GM10248 (cell line): ENCODE measurements at regions of chr16 and their contacts with region 1.

Region 1: DNA sequence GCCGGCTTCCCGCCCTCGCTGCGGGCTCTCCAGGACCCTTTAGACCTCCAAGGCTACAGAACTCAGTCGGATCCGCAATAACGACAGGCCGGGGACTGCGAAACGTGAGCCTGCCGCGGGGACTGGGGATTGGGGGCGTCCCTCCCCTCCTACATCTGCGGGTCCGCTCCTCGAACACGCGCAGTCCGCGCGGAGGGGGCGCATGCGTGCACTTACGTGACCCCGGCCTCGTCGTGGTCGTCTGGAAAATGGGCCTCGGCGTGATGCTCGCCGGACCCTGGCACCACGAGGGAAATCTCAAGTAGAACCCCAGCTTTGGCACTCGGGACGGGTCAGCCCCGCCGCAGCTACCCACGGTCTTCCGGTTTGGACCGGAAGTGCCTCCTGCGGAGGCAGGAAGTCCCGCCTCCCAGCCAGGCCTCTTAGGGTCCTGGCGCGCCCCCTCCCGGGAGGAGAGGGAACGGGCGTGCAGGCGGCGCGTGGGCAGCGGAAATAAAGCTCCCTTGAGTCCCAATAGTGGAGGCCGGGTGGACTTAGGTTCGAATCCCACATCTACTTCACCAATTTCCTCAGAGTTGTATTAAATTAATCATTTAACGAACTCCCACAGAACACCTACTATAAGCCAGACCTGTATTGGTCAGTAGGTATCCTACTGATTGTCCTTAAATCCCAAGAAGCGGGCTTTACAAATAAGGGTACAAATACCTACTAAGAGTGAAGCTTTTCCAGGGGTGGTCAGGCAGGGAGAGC is at the start of gene TAF1C:
- DNase-seq: peak; percentile 99
- CTCF ChIP-seq: peak; percentile 99

Region 2: DNA sequence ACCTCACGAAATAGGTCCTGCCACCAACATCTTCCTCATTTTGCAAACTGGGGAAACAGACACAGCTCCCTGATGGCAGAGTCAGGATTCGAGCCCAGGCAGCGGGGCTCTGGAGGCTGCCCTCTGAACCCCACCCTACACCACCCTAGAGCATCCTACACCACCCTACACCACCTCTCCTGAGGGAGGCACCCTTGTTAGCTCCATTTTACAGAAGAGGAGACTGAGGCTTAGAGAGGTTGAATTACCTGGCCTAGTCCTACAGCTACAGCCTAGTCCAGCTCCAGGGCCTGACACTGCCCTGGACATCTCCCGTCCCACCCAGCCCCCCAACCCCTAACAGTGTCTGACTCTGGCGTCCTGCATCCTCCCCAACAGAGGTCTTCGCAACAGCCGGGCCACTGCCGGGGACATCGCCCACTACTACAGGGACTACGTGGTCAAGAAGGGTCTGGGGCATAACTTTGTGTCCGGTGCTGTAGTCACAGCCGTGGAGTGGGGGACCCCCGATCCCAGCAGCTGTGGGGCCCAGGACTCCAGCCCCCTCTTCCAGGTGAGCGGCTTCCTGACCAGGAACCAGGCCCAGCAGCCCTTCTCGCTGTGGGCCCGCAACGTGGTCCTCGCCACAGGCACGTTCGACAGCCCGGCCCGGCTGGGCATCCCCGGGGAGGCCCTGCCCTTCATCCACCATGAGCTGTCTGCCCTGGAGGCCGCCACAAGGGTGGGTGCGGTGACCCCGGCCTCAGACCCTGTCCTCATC is 222.0 kb before region 1 on chr16:
- CTCF ChIA-PET with region 1: interaction called, 11 read pairs
- POLR2A ChIA-PET with region 1: no interaction called
- DNase-seq: no peak
- CTCF ChIP-seq: no peak

Region 3: DNA sequence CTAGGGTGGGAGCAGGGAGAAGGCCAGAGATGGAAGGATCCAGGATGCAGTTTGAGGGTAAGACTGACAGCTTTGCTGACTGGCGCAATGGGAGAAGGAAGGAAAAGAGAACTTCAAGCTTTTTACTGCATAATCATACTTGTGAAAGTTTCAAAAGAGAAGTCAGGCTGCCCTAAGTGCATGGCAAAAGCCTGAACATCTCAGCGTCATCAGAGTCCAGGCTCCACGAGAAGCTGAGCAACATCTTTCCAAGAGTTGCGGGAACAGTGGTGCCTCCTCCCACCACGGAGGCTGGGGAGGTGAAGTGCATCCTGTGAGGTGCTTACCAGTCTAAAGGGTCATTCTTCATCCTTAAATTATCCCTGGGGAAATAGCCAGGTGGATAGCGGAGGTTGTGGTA is 117.3 kb before region 1 on chr16:
- CTCF ChIA-PET with region 1: interaction called, 11 read pairs
- POLR2A ChIA-PET with region 1: no interaction called
- DNase-seq: no peak
- CTCF ChIP-seq: no peak

Region 4: GRCh38 chr16:84096115-84097012 is 90.5 kb before region 1 on chr16:
- CTCF ChIA-PET with region 1: interaction called, 155 read pairs
- POLR2A ChIA-PET with region 1: no interaction called
- DNase-seq: no peak
- CTCF ChIP-seq: no peak

Region 5: GRCh38 chr16:84116720-84117493 is 70.0 kb before region 1 on chr16 and contains the start of gene MBTPS1:
- CTCF ChIA-PET with region 1: interaction called, 24 read pairs
- POLR2A ChIA-PET with region 1: interaction called, 4 read pairs
- DNase-seq: peak; percentile 97
- CTCF ChIP-seq: no peak

Region 6: DNA sequence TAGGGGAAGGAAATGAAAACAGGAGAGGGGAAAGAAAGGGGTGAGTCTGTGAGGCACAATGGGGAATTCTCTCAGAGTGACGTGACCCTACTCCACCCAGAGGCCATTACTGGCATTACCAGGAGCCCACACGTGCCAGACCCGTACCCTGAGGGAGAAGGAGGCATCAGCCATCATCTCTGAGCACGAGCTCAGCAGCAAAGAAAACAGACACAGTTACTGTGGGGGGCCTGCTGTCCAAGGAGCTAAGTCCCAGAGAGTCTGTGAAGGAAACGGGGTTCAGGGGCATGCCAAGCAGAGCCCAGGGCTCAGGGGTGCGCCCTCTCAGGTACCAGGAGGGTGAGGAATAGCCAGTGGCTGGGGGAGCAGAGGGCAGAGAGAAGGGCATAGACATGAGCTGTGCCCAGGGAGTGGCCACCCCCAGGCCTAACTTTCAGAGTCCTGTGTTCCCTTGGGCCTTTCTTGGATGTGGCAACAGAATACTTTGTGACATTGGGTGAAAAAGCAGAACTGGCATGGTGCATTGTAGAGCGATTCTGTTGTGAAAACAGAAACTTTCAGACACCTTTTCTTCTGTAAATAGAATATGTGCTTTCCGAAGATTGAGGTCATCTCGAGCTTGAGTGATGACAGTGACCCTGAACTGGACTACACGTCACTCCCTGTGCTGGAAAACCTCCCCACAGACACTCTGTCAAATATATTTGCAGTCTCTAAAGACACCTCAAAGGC is 11.3 kb before region 1 on chr16:
- CTCF ChIA-PET with region 1: interaction called, 39 read pairs
- POLR2A ChIA-PET with region 1: no interaction called
- DNase-seq: peak; percentile 75
- CTCF ChIP-seq: no peak

Region 7: GRCh38 chr16:84243732-84244131 is 56.9 kb after region 1 on chr16:
- CTCF ChIA-PET with region 1: no interaction called
- POLR2A ChIA-PET with region 1: no interaction called
- DNase-seq: no peak
- CTCF ChIP-seq: no peak

Region 8: GRCh38 chr16:84406006-84406963 is 219.4 kb after region 1 on chr16:
- CTCF ChIA-PET with region 1: no interaction called
- POLR2A ChIA-PET with region 1: no interaction called
- DNase-seq: no peak
- CTCF ChIP-seq: no peak